ENCODE measurements at regions of chr3 and their contacts with region 1.

Region 1: DNA sequence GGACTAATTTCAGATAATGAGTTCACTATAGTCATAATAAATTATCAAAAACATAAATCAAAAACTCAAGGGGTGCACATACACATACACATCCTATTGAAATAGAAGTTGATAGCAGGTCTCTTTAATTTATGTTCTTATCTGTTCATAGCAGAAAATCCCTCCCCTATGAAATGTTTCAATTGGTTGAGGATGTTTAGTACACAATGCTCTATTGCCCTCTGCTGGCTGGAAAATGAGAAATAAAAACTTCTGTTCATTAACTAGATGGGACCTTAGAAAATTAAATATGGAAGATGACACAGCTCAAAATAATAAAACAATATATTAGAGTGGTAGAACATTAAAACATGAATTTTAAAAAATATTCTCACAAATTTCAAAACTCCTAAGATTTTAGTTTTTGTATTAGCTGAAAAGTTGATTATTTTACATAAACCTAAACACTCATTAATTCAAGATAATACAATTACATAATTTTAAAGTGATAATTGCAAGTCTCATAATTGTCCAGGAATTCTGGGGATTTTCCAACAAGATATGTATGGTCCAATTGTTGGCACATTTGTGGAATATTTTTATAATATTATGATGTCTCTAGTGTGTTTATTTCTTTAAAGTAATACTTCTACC is 735.0 kb downstream of the ROBO1 start:
- DNase-seq: no peak

Region 2: GRCh38 chr3:78659386-78659987 is 373.3 kb before region 1 on chr3:
- intact Hi-C with region 1: loop called (anchors 5 kb)
- DNase-seq: no peak